Calu3 (cell line): ENCODE measurements at regions of chr7 and their contacts with region 1.

Region 1: DNA sequence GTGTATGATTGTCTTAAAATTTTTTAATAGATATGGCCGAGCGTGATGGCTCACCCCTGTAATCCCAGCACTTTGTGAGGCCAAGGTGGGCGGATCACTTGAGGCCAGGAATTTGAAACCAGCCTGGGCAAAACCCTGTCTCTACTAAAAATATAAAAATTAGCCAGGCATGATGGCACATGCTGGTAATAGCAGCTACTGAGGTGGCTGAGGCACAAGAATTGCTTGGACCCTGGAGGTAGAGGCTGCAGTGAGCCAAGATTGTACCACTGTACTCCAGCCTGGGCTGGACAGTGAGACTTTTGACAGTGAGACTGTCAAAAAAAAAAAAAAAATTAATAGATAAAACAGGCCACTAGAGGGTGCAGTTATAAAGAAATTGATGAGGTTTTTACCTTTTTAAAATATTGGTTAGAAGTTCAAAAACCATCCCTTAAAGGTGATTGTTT is 20.5 kb downstream of the NOM1 start:
- DNase-seq: no peak
- H3K4me3 Mint-ChIP-seq: no peak overlapping the region
- H3K27ac Mint-ChIP-seq: no peak overlapping the region
- H3K4me1 Mint-ChIP-seq: no peaks in the 10 kb centered on the region
- H3K27me3 Mint-ChIP-seq: no peaks in the 10 kb centered on the region
- CTCF ChIP-seq: peak; percentile 33

Region 2: GRCh38 chr7:157004050-157004838 is 34.2 kb after region 1 on chr7:
- CTCF ChIA-PET with region 1: no interaction called
- intact Hi-C with region 1: no loop called
- DNase-seq: no peak
- H3K4me3 Mint-ChIP-seq: no peak overlapping the region
- H3K27ac Mint-ChIP-seq: no peak overlapping the region
- H3K4me1 Mint-ChIP-seq: peaks cover 23% of the 10 kb centered on the region
- H3K27me3 Mint-ChIP-seq: no peaks in the 10 kb centered on the region
- CTCF ChIP-seq: no peak

Region 3: GRCh38 chr7:157150882-157151281 is 180.9 kb after region 1 on chr7:
- CTCF ChIA-PET with region 1: interaction called, 5 read pairs
- intact Hi-C with region 1: loop called (anchors 10 kb)
- DNase-seq: no peak
- H3K4me3 Mint-ChIP-seq: no peak overlapping the region
- H3K27ac Mint-ChIP-seq: no peak overlapping the region
- H3K4me1 Mint-ChIP-seq: peaks cover 12% of the 10 kb centered on the region
- H3K27me3 Mint-ChIP-seq: no peaks in the 10 kb centered on the region
- CTCF ChIP-seq: no peak

Region 4: GRCh38 chr7:157238087-157238486 is 268.1 kb after region 1 on chr7:
- CTCF ChIA-PET with region 1: no interaction called
- intact Hi-C with region 1: loop called (anchors 10 kb)
- DNase-seq: peak; percentile 44
- H3K4me3 Mint-ChIP-seq: no peak overlapping the region
- H3K27ac Mint-ChIP-seq: peak overlapping the region; percentile 2
- H3K4me1 Mint-ChIP-seq: no peaks in the 10 kb centered on the region
- H3K27me3 Mint-ChIP-seq: no peaks in the 10 kb centered on the region
- CTCF ChIP-seq: peak; percentile 59